GM12878 (cell line): ENCODE measurements at regions of chr2 and their contacts with region 1.

Region 1: DNA sequence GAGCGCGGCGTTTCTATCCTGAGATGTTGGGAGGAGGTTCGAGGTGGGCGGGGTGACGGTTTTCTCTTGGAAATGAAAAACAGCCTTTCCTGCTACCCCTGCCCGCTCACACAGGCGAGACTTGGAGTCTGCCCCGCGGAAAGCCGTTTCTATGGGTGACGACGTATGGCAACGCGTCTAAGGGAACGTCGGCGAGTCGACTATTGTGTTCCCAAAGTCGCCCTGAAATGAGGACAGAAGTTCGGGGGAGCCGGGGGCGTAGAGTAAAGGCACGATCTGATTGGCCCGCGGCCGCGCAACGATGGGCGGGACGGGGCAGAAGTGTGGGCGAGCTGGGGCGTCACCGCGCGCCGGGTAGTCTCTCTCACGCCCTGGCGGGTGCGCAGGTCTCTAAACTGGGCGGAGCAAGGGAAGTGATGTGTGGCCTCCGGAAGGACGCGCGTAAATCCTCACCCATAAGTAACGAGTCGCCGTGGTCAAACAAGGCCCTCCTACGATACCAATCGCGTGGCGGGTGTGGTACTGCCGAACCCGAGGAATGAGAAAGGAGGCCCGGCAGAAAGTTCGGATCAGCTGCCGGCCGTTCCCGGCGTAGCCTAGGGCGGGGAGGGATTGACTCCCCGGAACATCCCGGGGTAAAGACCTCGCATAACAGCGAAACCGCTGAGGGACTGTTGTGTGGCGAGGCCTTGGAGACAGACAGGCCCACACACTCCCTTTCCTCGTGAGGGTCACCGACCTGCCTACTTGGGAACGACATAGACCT is 89.6 kb downstream of the FAM161A start:
- DNase-seq: peak; percentile 93
- ATAC-seq: peak; percentile 99
- H3K4me3 ChIP-seq: peak overlapping the region; percentile 71
- H3K27ac ChIP-seq: peak overlapping the region; percentile 96
- H3K4me1 ChIP-seq: peaks cover 4% of the 10 kb centered on the region
- H3K27me3 ChIP-seq: no peaks in the 10 kb centered on the region; a peak in 1 of 4 replicates
- CTCF ChIP-seq: no peak
- EP300 ChIP-seq: peak in 1 of 2 experiments; percentile 38; a peak in 1 of 4 replicates
- POLR2A ChIP-seq: peak; percentile 93
- RAD21 ChIP-seq: 0 out of 2 replicates have a peak, but pooled peaks have one; percentile 2

Region 2: DNA sequence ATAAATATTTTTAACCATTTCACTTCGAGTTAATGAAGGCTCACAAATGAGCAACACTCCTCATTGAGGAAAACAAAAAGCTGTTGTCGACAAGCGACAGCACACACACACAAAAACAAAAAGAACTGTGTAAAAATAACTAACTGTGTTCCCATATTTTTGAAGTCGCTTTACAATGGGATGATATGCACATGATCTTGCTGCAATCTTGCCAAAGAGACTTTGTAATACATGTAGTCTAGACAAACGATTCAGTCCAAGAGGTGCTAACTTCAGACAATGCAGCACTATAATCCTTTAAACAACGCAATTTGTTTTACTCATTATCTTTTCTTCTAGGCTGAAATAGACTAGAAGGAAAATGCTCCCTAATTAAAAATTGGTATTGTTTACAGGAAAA is 286.1 kb before region 1 on chr2:
- CTCF ChIA-PET with region 1: no interaction called
- POLR2A ChIA-PET with region 1: no interaction called
- RAD21 ChIA-PET with region 1: no interaction called
- SMC1A ChIA-PET with region 1: no interaction called
- in situ Hi-C with region 1: no loop called
- intact Hi-C with region 1: no loop called
- DNase-seq: no peak
- ATAC-seq: no peak
- H3K4me3 ChIP-seq: no peak overlapping the region
- H3K27ac ChIP-seq: no peak overlapping the region
- H3K4me1 ChIP-seq: no peaks in the 10 kb centered on the region
- H3K27me3 ChIP-seq: no peaks in the 10 kb centered on the region
- CTCF ChIP-seq: no peak
- EP300 ChIP-seq: no peak
- POLR2A ChIP-seq: no peak
- RAD21 ChIP-seq: no peak

Region 3: DNA sequence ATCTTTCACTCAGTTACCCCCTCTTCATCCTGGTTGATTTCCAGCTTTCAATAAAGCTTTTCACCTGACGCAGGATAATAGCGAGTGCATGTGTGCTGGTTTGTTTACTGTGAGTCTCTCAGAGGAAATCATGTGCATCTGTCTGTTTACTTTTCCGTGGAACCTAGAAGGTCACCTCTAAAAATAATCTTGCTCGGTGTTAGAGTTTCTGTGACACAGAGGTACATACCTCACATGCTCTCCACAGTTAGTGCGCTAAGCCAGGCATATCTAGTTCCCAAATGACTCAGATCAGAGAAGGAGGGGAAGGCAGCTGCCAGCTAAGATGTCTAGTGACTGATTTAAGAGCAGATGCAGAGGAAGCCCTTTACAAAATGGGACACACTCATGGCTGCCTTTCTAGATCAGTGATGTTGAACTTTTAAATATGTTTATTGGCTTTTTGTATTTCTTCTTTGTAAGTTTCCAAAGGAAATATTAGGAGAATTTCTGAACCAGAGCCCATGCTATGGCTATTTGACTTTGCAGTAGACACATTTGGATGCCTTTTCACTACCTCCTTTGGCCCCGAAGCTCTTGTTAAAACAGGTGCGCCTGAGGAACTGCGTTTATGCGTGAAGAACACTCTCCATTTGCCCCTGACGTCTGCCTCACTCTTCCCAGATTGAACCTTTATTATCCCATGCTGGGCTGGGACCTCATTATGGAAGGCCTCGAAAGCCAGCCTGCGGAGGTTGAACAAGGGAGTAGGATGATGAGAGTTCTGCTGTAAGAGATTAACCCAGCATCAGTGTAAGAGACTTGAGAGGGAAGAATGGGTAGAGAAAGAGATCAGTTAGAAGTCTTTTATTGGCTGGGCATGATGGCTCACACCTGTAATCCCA is 56.0 kb before region 1 on chr2:
- CTCF ChIA-PET with region 1: interaction called, 4 read pairs
- POLR2A ChIA-PET with region 1: interaction called, 7 read pairs
- RAD21 ChIA-PET with region 1: no interaction called
- SMC1A ChIA-PET with region 1: interaction called, 4 read pairs
- in situ Hi-C with region 1: no loop called
- intact Hi-C with region 1: loop called (anchors 5 kb)
- DNase-seq: peak; percentile 92
- ATAC-seq: peak; percentile 99
- H3K4me3 ChIP-seq: no peak overlapping the region
- H3K27ac ChIP-seq: peak overlapping the region; percentile 79
- H3K4me1 ChIP-seq: peaks cover 16% of the 10 kb centered on the region
- H3K27me3 ChIP-seq: no peaks in the 10 kb centered on the region
- CTCF ChIP-seq: no peak
- EP300 ChIP-seq: peak; percentile 86 to 89
- POLR2A ChIP-seq: peak; percentile 46; the same call in 1 of the 2 replicates
- RAD21 ChIP-seq: peak; percentile 35; the same call in 1 of the 2 replicates

Region 4: GRCh38 chr2:61807036-61807757 is 43.0 kb after region 1 on chr2:
- CTCF ChIA-PET with region 1: no interaction called
- POLR2A ChIA-PET with region 1: no interaction called
- RAD21 ChIA-PET with region 1: no interaction called
- SMC1A ChIA-PET with region 1: no interaction called
- in situ Hi-C with region 1: no loop called
- intact Hi-C with region 1: no loop called
- DNase-seq: peak; percentile 24
- ATAC-seq: peak; percentile 75
- H3K4me3 ChIP-seq: 0 out of 2 replicates have a peak overlapping the region, but pooled peaks have one; percentile 5
- H3K27ac ChIP-seq: peak overlapping the region; percentile 79
- H3K4me1 ChIP-seq: peaks cover 8% of the 10 kb centered on the region
- H3K27me3 ChIP-seq: no peaks in the 10 kb centered on the region
- CTCF ChIP-seq: no peak
- EP300 ChIP-seq: no peak
- POLR2A ChIP-seq: no peak
- RAD21 ChIP-seq: no peak

Region 5: GRCh38 chr2:61854474-61855182 is 90.4 kb after region 1 on chr2:
- CTCF ChIA-PET with region 1: no interaction called
- POLR2A ChIA-PET with region 1: no interaction called
- RAD21 ChIA-PET with region 1: interaction called, 5 read pairs
- SMC1A ChIA-PET with region 1: no interaction called
- in situ Hi-C with region 1: no loop called
- intact Hi-C with region 1: loop called (anchors 5 kb)
- DNase-seq: peak; percentile 93
- ATAC-seq: peak; percentile 93
- H3K4me3 ChIP-seq: peak overlapping the region; percentile 82
- H3K27ac ChIP-seq: peak overlapping the region; percentile 87
- H3K4me1 ChIP-seq: peaks cover 9% of the 10 kb centered on the region
- H3K27me3 ChIP-seq: no peaks in the 10 kb centered on the region
- CTCF ChIP-seq: no peak
- EP300 ChIP-seq: no peak
- POLR2A ChIP-seq: peak; percentile 60
- RAD21 ChIP-seq: no peak

Region 6: DNA sequence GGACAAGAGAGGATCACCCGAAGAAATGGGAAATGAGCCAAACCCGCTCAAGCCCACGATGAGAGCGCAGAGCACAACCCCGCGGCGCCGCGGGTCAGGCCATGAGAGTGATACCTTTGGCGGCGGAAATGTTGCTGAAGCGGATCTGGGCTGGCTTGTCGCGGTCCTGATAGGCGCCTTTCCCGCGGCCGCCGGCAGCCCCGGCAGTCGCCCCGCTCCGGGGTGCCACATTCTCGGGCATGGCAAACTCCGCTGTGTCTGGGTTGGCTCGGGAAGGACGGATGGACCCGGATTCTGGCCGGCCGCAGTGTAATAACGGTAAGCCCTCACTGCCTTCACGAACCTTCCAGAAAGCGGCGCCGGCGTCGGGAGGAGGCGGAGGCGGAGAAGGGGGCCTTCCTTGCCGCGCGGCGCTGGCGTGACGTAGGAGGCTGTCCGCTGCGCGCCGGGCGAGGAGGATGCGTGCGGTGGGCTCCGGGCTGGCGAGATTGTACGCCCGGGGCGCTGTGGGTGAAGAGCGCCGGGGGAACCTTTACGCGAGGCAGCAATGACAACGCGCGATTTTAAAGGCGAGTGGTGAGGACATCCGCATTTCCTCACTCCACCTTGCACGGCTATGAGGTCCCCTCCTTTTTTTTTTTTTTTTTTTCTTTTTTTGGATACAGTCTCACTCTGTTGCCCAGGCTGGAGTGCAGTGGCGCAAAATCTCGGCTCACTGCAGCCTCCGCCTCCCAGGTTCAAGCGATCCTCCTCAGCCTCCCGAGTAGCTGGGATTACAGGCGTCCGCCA is 124.2 kb after region 1 on chr2 and contains the start of gene CCT4:
- CTCF ChIA-PET with region 1: no interaction called
- POLR2A ChIA-PET with region 1: no interaction called
- RAD21 ChIA-PET with region 1: no interaction called
- SMC1A ChIA-PET with region 1: no interaction called
- in situ Hi-C with region 1: no loop called
- intact Hi-C with region 1: loop called (anchors 5 kb)
- DNase-seq: peak; percentile 72
- ATAC-seq: peak; percentile 90
- H3K4me3 ChIP-seq: peak within 1 kb of the TSS; percentile 78
- H3K27ac ChIP-seq: peak within 1 kb of the TSS; percentile 86
- H3K4me1 ChIP-seq: peaks cover 3% of the 10 kb centered on the region; the same call in 1 of the 2 replicates
- H3K27me3 ChIP-seq: no peaks in the 10 kb centered on the region
- CTCF ChIP-seq: no peak
- EP300 ChIP-seq: peak; percentile 23 to 44; a peak in 1 of 4 replicates
- POLR2A ChIP-seq: peak; percentile 99
- RAD21 ChIP-seq: no peak
- polyA plus RNA-seq, gene CCT4: 76.6 to 179 TPM